CD4-positive, alpha-beta T cell (primary cell): ENCODE measurements at regions of chr4 and their contacts with region 1.

Region 1: GRCh38 chr4:139554893-139555704 is 920 bp downstream of the SETD7 start:
- DNase-seq: peak; percentile 72 to 94 (median 84)
- ATAC-seq: peak; percentile 78
- H3K4me3 ChIP-seq: peak overlapping the region; percentile 96
- H3K4me3 Mint-ChIP-seq: peak overlapping the region; percentile 95
- H3K27ac ChIP-seq: peak overlapping the region; percentile 40 to 74
- H3K27ac Mint-ChIP-seq: peak overlapping the region; percentile 95
- H3K4me1 ChIP-seq: peaks cover 40% of the 10 kb centered on the region
- H3K4me1 Mint-ChIP-seq: peaks cover 67% of the 10 kb centered on the region
- H3K27me3 ChIP-seq: no peaks in the 10 kb centered on the region
- H3K27me3 Mint-ChIP-seq: peaks cover 9% of the 10 kb centered on the region
- CTCF ChIP-seq: no peak

Region 2: GRCh38 chr4:139015269-139015947 is 539.7 kb before region 1 on chr4 and contains the start of gene NOCT:
- CTCF ChIA-PET with region 1: no interaction called
- POLR2A ChIA-PET with region 1: interaction called, 10 read pairs
- intact Hi-C with region 1: no loop called
- DNase-seq: peak; percentile 75 to 98 (median 86)
- ATAC-seq: peak; percentile 90
- H3K4me3 ChIP-seq: peak within 1 kb of the TSS; percentile 74
- H3K4me3 Mint-ChIP-seq: peak within 1 kb of the TSS; percentile 93
- H3K27ac ChIP-seq: peak within 1 kb of the TSS; percentile 78 to 87
- H3K27ac Mint-ChIP-seq: peak within 1 kb of the TSS; percentile 95
- H3K4me1 ChIP-seq: peaks cover 20% of the 10 kb centered on the region
- H3K4me1 Mint-ChIP-seq: peaks cover 26% of the 10 kb centered on the region
- H3K27me3 ChIP-seq: no peaks in the 10 kb centered on the region
- H3K27me3 Mint-ChIP-seq: no peaks in the 10 kb centered on the region
- CTCF ChIP-seq: no peak
- total RNA-seq, gene NOCT: 13.7 to 15.8 TPM

Region 3: GRCh38 chr4:139177868-139178611 is 377.1 kb before region 1 on chr4:
- CTCF ChIA-PET with region 1: no interaction called
- POLR2A ChIA-PET with region 1: interaction called, 25 read pairs
- intact Hi-C with region 1: loop called in 1 of 2 experiments (anchors 5 kb)
- DNase-seq: peak; percentile 80 to 96 (median 90)
- ATAC-seq: peak; percentile 74
- H3K4me3 ChIP-seq: peak overlapping the region; percentile 85
- H3K4me3 Mint-ChIP-seq: peak overlapping the region; percentile 96
- H3K27ac ChIP-seq: peak overlapping the region; percentile 77 to 88
- H3K27ac Mint-ChIP-seq: peak overlapping the region; percentile 93
- H3K4me1 ChIP-seq: peaks cover 18% of the 10 kb centered on the region
- H3K4me1 Mint-ChIP-seq: peaks cover 26% of the 10 kb centered on the region
- H3K27me3 ChIP-seq: no peaks in the 10 kb centered on the region
- H3K27me3 Mint-ChIP-seq: no peaks in the 10 kb centered on the region
- CTCF ChIP-seq: no peak

Region 4: DNA sequence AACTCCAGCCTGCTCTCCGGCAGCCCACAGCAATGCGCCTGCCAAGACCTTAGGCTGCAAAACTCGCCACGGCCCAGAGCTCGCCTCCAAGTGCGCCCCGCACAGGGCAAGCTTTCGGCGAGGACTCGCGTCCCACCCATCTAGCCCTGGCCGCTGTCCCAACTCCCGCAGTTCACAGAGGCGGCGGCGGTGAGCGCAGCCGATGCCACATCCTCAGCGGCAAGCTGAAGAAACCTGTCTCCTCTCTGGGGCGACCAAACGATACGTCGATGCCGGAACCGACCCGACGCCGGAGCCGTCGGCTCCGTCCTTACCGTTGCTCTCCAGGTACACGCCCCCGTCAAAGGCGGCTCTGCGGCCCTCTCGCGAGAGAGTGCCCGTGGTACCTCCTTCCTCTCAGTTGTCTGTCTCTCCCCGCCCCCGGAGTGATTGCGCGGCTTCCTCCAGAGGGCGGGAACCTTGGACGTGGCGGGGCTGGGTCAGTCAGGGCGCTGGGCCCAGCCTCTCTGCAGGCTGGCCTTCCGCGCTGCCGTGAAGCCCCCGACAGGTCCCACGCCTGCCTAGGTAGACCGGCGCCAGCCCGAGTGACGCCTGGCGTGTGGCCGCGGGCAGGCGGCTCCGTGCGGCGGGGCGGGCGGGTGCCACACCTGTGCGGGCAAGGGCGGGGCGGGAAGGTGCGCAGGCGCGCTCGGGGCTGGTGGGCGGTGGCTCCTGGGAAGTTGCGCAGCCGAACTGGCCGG is 101.6 kb before region 1 on chr4:
- CTCF ChIA-PET with region 1: interaction called, 4 read pairs
- POLR2A ChIA-PET with region 1: interaction called, 67 read pairs
- intact Hi-C with region 1: loop called (anchors 2 to 5 kb)
- DNase-seq: peak; percentile 93 to 98 (median 96)
- ATAC-seq: peak; percentile 85
- H3K4me3 ChIP-seq: peak overlapping the region; percentile 90
- H3K4me3 Mint-ChIP-seq: peak overlapping the region; percentile 96
- H3K27ac ChIP-seq: peak overlapping the region; percentile 93
- H3K27ac Mint-ChIP-seq: peak overlapping the region; percentile 99
- H3K4me1 ChIP-seq: peaks cover 35% of the 10 kb centered on the region
- H3K4me1 Mint-ChIP-seq: peaks cover 80% of the 10 kb centered on the region
- H3K27me3 ChIP-seq: no peaks in the 10 kb centered on the region
- H3K27me3 Mint-ChIP-seq: no peaks in the 10 kb centered on the region
- CTCF ChIP-seq: peak; percentile 4

Region 5: GRCh38 chr4:139530833-139531427 is 24.2 kb before region 1 on chr4:
- CTCF ChIA-PET with region 1: interaction called, 7 read pairs
- POLR2A ChIA-PET with region 1: interaction called, 9 read pairs
- intact Hi-C with region 1: loop called (anchors 2 to 5 kb)
- DNase-seq: peak; percentile 40 to 75 (median 53)
- ATAC-seq: peak; percentile 84
- H3K4me3 ChIP-seq: no peak overlapping the region
- H3K4me3 Mint-ChIP-seq: no peak overlapping the region
- H3K27ac ChIP-seq: no peak overlapping the region
- H3K27ac Mint-ChIP-seq: no peak overlapping the region
- H3K4me1 ChIP-seq: peaks cover 9% of the 10 kb centered on the region
- H3K4me1 Mint-ChIP-seq: peaks cover 5% of the 10 kb centered on the region
- H3K27me3 ChIP-seq: no peaks in the 10 kb centered on the region
- H3K27me3 Mint-ChIP-seq: no peaks in the 10 kb centered on the region
- CTCF ChIP-seq: peak; percentile 76

Region 6: DNA sequence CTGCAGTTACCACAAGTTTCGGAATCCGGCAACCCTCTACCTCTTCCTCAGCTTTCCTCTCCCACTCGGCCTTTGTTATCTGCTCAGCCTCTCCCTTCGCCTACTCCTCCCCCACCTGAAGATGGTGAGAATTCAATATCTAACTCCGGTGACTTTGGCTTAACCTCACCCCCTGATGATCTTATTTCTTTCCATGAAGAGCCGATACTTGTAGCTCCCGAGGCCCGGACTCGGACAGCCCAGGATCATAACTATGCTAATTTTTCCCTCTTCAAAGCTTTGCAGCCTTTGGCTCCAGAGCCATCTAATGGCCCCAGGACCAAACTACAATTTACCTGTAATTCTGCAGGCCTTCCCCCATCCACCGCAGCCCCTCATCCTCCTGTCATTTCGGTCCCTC is 78.6 kb after region 1 on chr4:
- CTCF ChIA-PET with region 1: no interaction called
- POLR2A ChIA-PET with region 1: no interaction called
- intact Hi-C with region 1: no loop called
- DNase-seq: no peak
- ATAC-seq: no peak
- H3K4me3 ChIP-seq: no peak overlapping the region
- H3K4me3 Mint-ChIP-seq: no peak overlapping the region
- H3K27ac ChIP-seq: no peak overlapping the region
- H3K27ac Mint-ChIP-seq: no peak overlapping the region
- H3K4me1 ChIP-seq: no peaks in the 10 kb centered on the region
- H3K4me1 Mint-ChIP-seq: no peaks in the 10 kb centered on the region
- H3K27me3 ChIP-seq: no peaks in the 10 kb centered on the region
- H3K27me3 Mint-ChIP-seq: peaks cover 22% of the 10 kb centered on the region
- CTCF ChIP-seq: no peak

Region 7: GRCh38 chr4:139665690-139666529 is 110.8 kb after region 1 on chr4 and contains the start of gene MGST2:
- CTCF ChIA-PET with region 1: no interaction called
- POLR2A ChIA-PET with region 1: interaction called, 16 read pairs
- intact Hi-C with region 1: no loop called
- DNase-seq: peak in 9 of 14 experiments; percentile 4 to 59 (median 28)
- ATAC-seq: peak; percentile 51
- H3K4me3 ChIP-seq: peak within 1 kb of the TSS; percentile 71
- H3K4me3 Mint-ChIP-seq: peak within 1 kb of the TSS; percentile 89
- H3K27ac ChIP-seq: peak within 1 kb of the TSS in 1 of 2 donors; percentile 32
- H3K27ac Mint-ChIP-seq: peak within 1 kb of the TSS; percentile 70
- H3K4me1 ChIP-seq: peaks cover 17% of the 10 kb centered on the region
- H3K4me1 Mint-ChIP-seq: peaks cover 21% of the 10 kb centered on the region
- H3K27me3 ChIP-seq: no peaks in the 10 kb centered on the region
- H3K27me3 Mint-ChIP-seq: no peaks in the 10 kb centered on the region
- CTCF ChIP-seq: no peak
- total RNA-seq, gene MGST2: 0.70 to 3.0 TPM

Region 8: DNA sequence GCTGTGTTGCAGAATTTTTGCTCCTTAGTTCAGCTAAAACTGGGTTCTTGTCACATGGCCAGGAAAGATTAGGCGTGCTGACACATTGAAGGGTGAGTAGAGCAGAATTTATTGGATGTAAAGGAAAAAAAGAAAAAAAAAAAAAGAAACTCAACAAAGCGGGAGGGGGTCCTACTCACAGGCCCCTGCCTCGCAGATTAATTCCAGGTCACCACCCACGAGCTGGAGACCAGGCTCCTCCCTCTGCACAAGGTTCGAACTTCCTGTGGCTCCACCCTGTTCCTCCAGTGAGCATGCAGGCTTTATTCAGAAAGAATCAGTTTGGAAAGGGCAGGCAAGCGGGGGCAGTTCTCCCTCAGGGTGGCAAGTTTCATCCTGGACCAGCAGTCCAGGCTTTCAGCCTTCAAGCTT is 127.6 kb after region 1 on chr4:
- CTCF ChIA-PET with region 1: no interaction called
- POLR2A ChIA-PET with region 1: no interaction called
- intact Hi-C with region 1: no loop called
- DNase-seq: no peak
- ATAC-seq: no peak
- H3K4me3 ChIP-seq: no peak overlapping the region
- H3K4me3 Mint-ChIP-seq: no peak overlapping the region
- H3K27ac ChIP-seq: no peak overlapping the region
- H3K27ac Mint-ChIP-seq: no peak overlapping the region
- H3K4me1 ChIP-seq: no peaks in the 10 kb centered on the region
- H3K4me1 Mint-ChIP-seq: peaks cover 9% of the 10 kb centered on the region
- H3K27me3 ChIP-seq: no peaks in the 10 kb centered on the region
- H3K27me3 Mint-ChIP-seq: no peaks in the 10 kb centered on the region
- CTCF ChIP-seq: no peak